ENCODE measurements at regions of chr19 and their contacts with region 1.

Region 1: GRCh38 chr19:19821366-19821951 is at the start of gene ZNF506:
- DNase-seq: peak; percentile 99
- ATAC-seq: peak; percentile 88
- H3K4me3 Mint-ChIP-seq: peak within 1 kb of the TSS; percentile 96
- H3K27ac Mint-ChIP-seq: peak within 1 kb of the TSS; percentile 99
- H3K4me1 Mint-ChIP-seq: peaks cover 43% of the 10 kb centered on the region
- H3K27me3 Mint-ChIP-seq: no peaks in the 10 kb centered on the region
- total RNA-seq, gene ZNF506: 33.3 to 41.3 TPM

Region 2: DNA sequence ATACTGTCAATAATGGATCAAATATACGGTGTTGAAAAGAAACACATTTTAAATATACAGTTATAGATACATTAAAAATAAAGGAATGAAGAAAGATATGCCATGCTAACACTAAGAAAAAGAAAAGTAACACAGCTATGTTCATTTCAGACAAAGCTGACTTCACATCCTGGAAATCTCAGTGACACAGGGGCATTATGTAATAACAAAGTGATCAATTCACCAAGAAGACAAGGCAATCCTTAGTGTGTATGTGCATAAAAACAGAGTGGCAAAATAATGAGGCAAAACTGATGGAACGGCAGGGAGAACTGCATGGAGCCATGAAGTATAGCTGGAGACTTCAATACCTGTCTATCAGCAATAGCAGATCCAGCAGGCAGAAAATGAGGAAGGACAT is 101.7 kb before region 1 on chr19:
- CTCF ChIA-PET with region 1: no interaction called
- POLR2A ChIA-PET with region 1: no interaction called
- intact Hi-C with region 1: no loop called
- DNase-seq: no peak
- ATAC-seq: no peak
- H3K4me3 Mint-ChIP-seq: no peak overlapping the region
- H3K27ac Mint-ChIP-seq: no peak overlapping the region
- H3K4me1 Mint-ChIP-seq: peaks cover 3% of the 10 kb centered on the region
- H3K27me3 Mint-ChIP-seq: no peaks in the 10 kb centered on the region

Region 3: DNA sequence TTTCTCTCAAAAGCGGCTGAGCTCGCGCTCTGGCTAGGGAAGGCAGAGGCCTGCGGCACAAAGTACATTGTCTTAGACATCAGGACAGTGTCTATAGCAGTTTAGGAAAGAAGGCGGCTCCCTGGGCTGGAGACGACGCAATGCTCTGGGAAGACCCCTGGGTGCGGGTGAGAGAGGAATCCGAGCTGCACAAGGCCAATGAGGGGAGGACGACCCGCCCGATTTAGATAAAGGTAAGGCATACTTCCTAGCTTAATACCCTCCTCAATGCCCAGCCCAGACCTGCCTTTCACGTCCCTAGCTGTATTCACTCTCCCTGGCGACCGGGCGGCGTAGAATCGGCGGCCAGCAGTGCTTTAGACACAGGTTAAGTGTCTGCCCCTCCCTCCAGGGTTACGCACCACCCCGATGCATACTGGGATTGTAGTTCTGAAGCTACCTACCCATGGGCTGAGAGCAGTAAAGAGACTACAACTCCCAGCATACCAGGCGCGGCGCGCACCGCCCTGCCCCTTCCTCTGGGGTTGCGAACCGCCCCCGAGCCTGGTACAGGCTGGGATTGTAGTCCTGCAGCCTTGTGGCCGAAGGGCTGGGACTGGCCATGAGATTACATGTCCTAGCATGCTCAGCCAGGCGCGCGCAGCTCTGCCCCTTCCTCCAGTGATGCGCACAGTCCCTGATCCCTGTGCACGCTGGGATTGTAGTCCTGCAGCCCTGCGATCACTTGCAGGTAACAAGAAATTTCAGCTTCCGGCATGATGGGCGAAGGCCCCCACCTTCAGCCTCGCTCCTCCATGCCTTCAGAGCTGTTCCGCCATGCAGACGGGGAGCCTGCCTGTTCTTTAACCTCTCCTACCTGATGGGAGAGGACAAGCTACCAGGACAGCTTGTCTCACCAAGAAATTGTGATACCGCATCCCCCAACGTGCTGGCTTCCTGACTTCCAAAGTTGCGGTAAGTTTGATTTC is 45.1 kb before region 1 on chr19:
- CTCF ChIA-PET with region 1: interaction called, 11 read pairs
- POLR2A ChIA-PET with region 1: interaction called, 27 read pairs
- intact Hi-C with region 1: loop called (anchors 1 kb)
- DNase-seq: peak; percentile 96
- ATAC-seq: peak; percentile 99
- H3K4me3 Mint-ChIP-seq: peak overlapping the region; percentile 98
- H3K27ac Mint-ChIP-seq: peak overlapping the region; percentile 85
- H3K4me1 Mint-ChIP-seq: peaks cover 37% of the 10 kb centered on the region
- H3K27me3 Mint-ChIP-seq: no peaks in the 10 kb centered on the region

Region 4: GRCh38 chr19:19865739-19866481 is 44.5 kb after region 1 on chr19 and contains the start of gene ZNF253:
- CTCF ChIA-PET with region 1: interaction called, 8 read pairs
- POLR2A ChIA-PET with region 1: interaction called, 12 read pairs
- intact Hi-C with region 1: loop called (anchors 1 to 2 kb)
- DNase-seq: peak; percentile 98
- ATAC-seq: peak; percentile 93
- H3K4me3 Mint-ChIP-seq: peak within 1 kb of the TSS; percentile 88
- H3K27ac Mint-ChIP-seq: peak within 1 kb of the TSS; percentile 98
- H3K4me1 Mint-ChIP-seq: peaks cover 21% of the 10 kb centered on the region
- H3K27me3 Mint-ChIP-seq: no peaks in the 10 kb centered on the region
- total RNA-seq, gene ZNF253: 16.1 to 25.1 TPM

Region 5: DNA sequence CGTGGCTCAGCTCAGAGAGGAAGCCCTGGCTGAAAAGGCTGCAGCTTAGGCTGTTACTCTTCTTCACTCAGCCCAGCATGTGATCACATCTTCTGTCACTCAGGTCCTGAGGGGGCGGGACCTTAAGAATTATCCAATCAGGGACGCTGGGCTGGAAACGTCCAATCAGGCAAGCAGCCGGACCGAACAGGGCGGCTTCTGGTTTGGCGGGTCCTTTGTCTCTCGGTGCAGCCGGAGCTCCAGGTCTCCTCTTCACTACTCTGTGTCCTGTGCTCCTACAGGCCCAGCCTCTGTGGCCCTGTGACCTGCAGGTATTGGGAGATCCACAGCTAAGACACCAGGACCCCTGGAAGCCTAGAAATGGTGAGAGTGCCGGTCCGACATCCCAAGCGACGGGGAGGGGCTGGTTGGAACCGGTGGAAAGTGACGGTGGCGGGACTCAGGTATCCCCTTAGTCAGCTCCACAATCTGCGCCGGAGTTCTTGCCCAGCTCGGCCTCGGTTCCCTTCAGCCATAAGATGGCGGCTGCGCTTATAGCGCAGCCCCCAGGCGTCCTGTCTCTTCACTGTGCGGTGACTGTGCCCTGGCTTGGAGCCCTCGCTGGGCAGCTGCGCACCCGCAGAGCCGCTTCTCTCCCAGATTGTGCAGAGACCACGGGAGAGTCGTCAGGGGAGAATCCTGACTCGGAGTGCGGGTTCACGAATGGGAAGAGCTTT is 79.4 kb after region 1 on chr19 and contains the start of gene ZNF93:
- CTCF ChIA-PET with region 1: interaction called, 4 read pairs
- POLR2A ChIA-PET with region 1: interaction called, 8 read pairs
- intact Hi-C with region 1: loop called in 1 of 2 experiments (anchors 1 kb)
- DNase-seq: peak; percentile 95
- ATAC-seq: peak; percentile 95
- H3K4me3 Mint-ChIP-seq: peak within 1 kb of the TSS; percentile 99
- H3K27ac Mint-ChIP-seq: peak within 1 kb of the TSS; percentile 97
- H3K4me1 Mint-ChIP-seq: peaks cover 39% of the 10 kb centered on the region
- H3K27me3 Mint-ChIP-seq: no peaks in the 10 kb centered on the region
- total RNA-seq, gene ZNF93: 21.7 to 22.3 TPM

Region 6: DNA sequence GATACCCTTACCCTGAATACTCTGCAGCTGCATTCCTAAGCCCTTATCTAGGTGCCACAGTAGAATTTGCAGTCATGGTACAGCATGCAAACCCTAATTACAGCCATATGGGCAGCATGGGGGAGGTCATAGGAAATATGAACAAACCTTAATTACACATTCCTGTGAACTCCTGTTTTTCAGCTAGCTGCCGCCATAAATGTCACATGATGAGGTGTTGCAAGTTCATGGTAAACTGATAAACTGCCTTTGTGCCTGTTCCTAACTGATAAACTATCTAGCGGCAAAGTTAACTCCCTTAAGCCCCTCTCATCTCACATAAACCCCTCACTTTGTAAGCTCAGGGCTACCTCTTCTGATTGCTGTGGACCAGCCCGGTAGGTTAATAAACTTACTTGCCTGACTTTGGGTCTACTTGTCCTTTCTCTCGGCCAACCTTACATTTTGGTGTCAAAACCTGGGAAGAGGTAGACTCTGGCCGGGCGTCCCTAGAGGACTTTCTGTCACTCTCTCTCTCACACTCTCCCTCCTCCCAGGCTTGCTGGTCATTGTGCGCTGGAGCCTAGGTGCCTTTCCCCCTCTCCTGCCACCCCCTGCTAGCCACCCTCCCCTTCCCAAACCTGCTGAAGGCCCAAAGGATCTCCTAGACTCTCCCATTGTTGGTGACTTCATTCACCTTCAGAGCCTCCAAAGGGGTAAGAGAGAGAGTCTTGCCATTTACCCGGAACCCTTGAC is 122.6 kb after region 1 on chr19:
- CTCF ChIA-PET with region 1: no interaction called
- POLR2A ChIA-PET with region 1: no interaction called
- intact Hi-C with region 1: no loop called
- DNase-seq: no peak
- ATAC-seq: no peak
- H3K4me3 Mint-ChIP-seq: no peak overlapping the region
- H3K27ac Mint-ChIP-seq: no peak overlapping the region
- H3K4me1 Mint-ChIP-seq: no peaks in the 10 kb centered on the region
- H3K27me3 Mint-ChIP-seq: no peaks in the 10 kb centered on the region

Measured in activated CD4-positive, alpha-beta T cell treated with anti-CD3 and anti-CD28 coated beads for 36 hours (primary cell).